ENCODE measurements at regions of chr15 and their contacts with region 1.

Region 1: GRCh38 chr15:89358755-89359439 is 24.3 kb upstream of the POLG start:
- DNase-seq: peak; percentile 82
- H3K4me3 Mint-ChIP-seq: peak overlapping the region; percentile 74
- H3K27ac Mint-ChIP-seq: no peak overlapping the region
- H3K4me1 Mint-ChIP-seq: peaks cover 10% of the 10 kb centered on the region
- H3K27me3 Mint-ChIP-seq: peaks cover 72% of the 10 kb centered on the region

Region 2: DNA sequence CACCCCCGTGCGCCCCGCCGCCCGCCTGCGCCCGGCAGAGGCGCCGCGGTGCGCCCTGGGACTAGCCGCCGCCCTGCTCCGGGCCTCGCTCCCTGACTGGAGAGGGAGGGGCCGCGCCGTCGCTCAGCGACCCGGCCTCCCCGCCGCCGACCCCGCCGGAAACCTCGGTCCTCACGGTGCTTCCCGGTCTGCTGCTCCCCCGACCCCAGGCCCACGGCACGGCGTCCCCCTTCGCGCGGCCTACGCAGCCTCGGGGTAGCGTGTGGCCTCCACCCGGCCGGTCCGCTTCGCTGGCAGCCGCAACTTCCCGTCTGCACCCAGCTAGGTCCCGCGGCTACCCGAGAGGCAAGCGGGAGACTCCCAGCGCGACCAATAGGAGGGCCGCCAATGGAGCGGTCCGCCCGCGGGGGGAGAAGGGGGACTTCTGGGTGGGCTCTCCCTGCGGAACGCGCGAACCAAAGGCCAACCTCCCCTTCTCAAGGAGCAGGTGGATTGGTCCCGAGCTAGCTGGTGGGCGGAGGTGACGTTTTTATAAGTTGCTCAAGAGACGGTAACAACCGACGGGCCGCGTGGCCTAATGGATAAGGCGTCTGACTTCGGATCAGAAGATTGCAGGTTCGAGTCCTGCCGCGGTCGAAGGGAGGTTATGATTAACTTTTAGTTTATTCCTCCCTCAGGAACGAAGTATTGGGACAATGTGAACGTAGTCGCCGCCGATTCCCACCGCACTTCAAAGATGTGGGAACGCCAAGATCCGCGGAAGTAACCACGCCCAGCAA is 24.2 kb before region 1 on chr15 and contains the start of gene POLG:
- CTCF ChIA-PET with region 1: interaction called, 25 read pairs
- POLR2A ChIA-PET with region 1: no interaction called
- DNase-seq: peak; percentile 98
- H3K4me3 Mint-ChIP-seq: peak within 1 kb of the TSS; percentile 80
- H3K27ac Mint-ChIP-seq: peak within 1 kb of the TSS; percentile 92
- H3K4me1 Mint-ChIP-seq: peaks cover 54% of the 10 kb centered on the region
- H3K27me3 Mint-ChIP-seq: peaks cover 6% of the 10 kb centered on the region
- total RNA-seq, gene POLG: 85.6 to 105 TPM

Region 3: GRCh38 chr15:89371228-89372079 is 12.6 kb after region 1 on chr15:
- CTCF ChIA-PET with region 1: interaction called, 28 read pairs
- POLR2A ChIA-PET with region 1: no interaction called
- DNase-seq: no peak
- H3K4me3 Mint-ChIP-seq: no peak overlapping the region
- H3K27ac Mint-ChIP-seq: no peak overlapping the region
- H3K4me1 Mint-ChIP-seq: peaks cover 5% of the 10 kb centered on the region
- H3K27me3 Mint-ChIP-seq: peaks cover 83% of the 10 kb centered on the region

Region 4: DNA sequence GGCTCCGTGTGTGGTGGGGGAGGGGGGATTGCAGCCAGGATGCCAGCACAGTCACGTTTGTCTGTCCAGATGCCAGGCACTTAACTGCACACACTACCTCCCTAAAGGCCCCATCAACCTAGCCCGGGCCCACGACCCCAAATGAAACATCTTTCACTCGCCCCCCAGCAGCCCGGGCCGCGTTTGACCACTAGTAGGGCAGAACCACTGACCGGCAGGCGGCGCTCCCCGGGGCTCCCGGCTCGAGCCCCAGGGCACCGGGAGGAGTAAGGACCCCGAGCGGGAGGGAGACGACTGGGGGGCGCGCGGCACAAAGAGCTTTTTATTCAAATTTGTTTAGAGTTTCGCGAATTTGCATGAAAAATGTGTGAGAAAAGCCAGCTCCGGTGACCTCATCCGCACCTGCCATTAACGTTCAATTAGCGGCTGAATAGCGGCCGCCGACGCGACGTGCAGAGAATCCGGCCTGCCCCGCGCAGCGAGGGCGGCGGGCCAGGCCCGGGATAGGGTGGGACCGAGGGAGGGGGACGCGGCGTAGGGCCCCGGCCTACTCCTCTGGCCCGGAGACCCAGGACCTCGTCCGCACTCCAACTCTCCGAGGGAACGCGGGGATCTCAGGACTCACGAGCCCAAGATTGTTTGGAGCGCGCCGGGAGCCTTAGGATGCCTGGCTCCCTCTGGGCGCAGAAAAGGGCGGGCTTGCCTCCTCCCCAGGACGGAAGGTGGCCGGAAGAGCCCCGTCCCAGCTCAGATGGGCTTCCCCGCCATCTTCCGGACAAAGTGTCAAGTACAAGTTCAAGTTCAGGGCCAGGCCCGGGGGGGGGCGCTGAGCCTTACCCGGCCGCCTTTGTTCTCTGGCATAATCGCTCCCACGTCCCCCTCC is 40.6 kb after region 1 on chr15:
- CTCF ChIA-PET with region 1: interaction called, 49 read pairs
- POLR2A ChIA-PET with region 1: no interaction called
- DNase-seq: no peak
- H3K4me3 Mint-ChIP-seq: peak overlapping the region; percentile 61
- H3K27ac Mint-ChIP-seq: no peak overlapping the region
- H3K4me1 Mint-ChIP-seq: peaks cover 21% of the 10 kb centered on the region
- H3K27me3 Mint-ChIP-seq: peaks cover 76% of the 10 kb centered on the region

Region 5: DNA sequence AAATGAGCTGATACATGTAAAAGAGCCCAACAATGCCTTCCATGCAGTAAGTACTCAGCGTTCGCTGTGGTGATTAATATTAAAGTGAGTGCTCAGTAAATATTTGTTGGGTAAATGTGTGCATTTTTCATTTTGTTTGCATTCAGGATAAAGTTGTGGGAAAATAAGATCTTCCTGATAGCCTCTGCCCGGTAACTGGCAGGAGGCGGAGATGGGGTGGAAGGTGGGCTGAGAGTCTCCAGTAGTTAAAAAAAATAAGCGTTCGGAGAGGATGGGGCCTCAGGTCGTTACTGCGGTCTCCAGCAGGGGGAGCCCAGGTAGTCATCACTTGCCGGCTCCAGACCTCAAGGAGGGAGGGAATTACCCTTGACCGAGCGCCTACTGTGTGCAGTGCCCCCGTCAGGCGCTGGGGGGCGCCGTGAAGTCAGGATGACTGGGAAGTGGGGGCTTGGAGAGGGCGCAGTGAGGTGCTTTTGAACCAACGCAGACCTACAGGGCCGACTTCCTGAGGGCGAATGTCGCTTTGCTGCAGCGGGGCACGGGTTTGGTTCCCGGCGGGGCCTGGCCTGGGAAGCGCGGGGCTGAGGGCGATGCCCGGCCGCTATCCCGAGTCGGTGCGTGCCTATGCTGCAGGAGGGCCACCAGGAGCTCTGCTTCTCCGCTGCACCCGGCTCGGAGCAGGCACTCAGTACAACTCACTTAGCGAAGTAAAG is 57.4 kb after region 1 on chr15:
- CTCF ChIA-PET with region 1: interaction called, 57 read pairs
- POLR2A ChIA-PET with region 1: no interaction called
- DNase-seq: peak; percentile 75
- H3K4me3 Mint-ChIP-seq: no peak overlapping the region
- H3K27ac Mint-ChIP-seq: no peak overlapping the region
- H3K4me1 Mint-ChIP-seq: peaks cover 10% of the 10 kb centered on the region
- H3K27me3 Mint-ChIP-seq: peaks cover 88% of the 10 kb centered on the region

Region 6: GRCh38 chr15:89442671-89443307 is 83.9 kb after region 1 on chr15:
- CTCF ChIA-PET with region 1: interaction called, 21 read pairs
- POLR2A ChIA-PET with region 1: no interaction called
- DNase-seq: peak; percentile 61
- H3K4me3 Mint-ChIP-seq: no peak overlapping the region
- H3K27ac Mint-ChIP-seq: no peak overlapping the region
- H3K4me1 Mint-ChIP-seq: no peaks in the 10 kb centered on the region
- H3K27me3 Mint-ChIP-seq: peaks cover 12% of the 10 kb centered on the region

Region 7: GRCh38 chr15:89623165-89623564 is 264.3 kb after region 1 on chr15:
- CTCF ChIA-PET with region 1: no interaction called
- POLR2A ChIA-PET with region 1: no interaction called
- DNase-seq: no peak
- H3K4me3 Mint-ChIP-seq: no peak overlapping the region
- H3K27ac Mint-ChIP-seq: no peak overlapping the region
- H3K4me1 Mint-ChIP-seq: no peaks in the 10 kb centered on the region
- H3K27me3 Mint-ChIP-seq: no peaks in the 10 kb centered on the region